ENCODE measurements at regions of chr7 and their contacts with region 1.

Region 1: GRCh38 chr7:18064242-18064838 is 36.7 kb upstream of the PRPS1L1 start:
- DNase-seq: peak in 1 of 2 experiments; percentile 80
- H3K4me3 ChIP-seq: no peak overlapping the region
- H3K27ac ChIP-seq: no peak overlapping the region
- H3K4me1 ChIP-seq: peaks cover 0 to under 1% (median 0%) of the 10 kb centered on the region in 4 experiments; a peak in 1 of 7 replicates
- H3K27me3 ChIP-seq: peaks cover 0 to 1% (median 0%) of the 10 kb centered on the region in 4 experiments; a peak in 1 of 7 replicates
- CTCF ChIP-seq: peak in 2 of 3 experiments; percentile 60 to 79; a peak in 3 of 4 replicates
- EP300 ChIP-seq: no peak
- POLR2A ChIP-seq: no peak
- RAD21 ChIP-seq: peak; percentile 65 to 73

Region 2: DNA sequence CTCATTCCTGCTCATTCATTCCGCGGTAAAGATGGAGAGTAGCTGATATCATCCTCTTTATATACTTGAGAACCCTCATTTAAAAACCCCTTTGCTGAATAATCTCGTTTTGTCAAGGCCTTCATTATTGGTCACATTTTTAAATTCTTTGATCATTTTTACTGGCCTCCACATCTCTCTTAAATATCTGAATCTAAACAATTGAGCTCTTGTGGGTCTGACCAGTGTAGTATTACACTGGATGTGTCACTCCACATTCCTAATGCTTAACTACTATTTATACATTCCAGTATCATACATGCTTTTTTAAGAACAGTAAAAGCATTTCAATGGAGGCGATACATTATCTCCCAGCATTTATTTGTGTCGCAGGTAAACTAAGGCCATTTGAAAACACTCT is 24.1 kb before region 1 on chr7:
- CTCF ChIA-PET with region 1: interaction called, 13 read pairs
- POLR2A ChIA-PET with region 1: no interaction called
- DNase-seq: no peak
- H3K4me3 ChIP-seq: no peak overlapping the region
- H3K27ac ChIP-seq: no peak overlapping the region
- H3K4me1 ChIP-seq: no peaks in the 10 kb centered on the region
- H3K27me3 ChIP-seq: no peaks in the 10 kb centered on the region
- CTCF ChIP-seq: no peak
- EP300 ChIP-seq: no peak
- POLR2A ChIP-seq: no peak
- RAD21 ChIP-seq: no peak

Region 3: GRCh38 chr7:18049262-18049661 is 15.1 kb before region 1 on chr7:
- CTCF ChIA-PET with region 1: interaction called, 22 read pairs
- POLR2A ChIA-PET with region 1: no interaction called
- DNase-seq: no peak
- H3K4me3 ChIP-seq: no peak overlapping the region
- H3K27ac ChIP-seq: no peak overlapping the region
- H3K4me1 ChIP-seq: no peaks in the 10 kb centered on the region
- H3K27me3 ChIP-seq: no peaks in the 10 kb centered on the region
- CTCF ChIP-seq: no peak
- EP300 ChIP-seq: no peak
- POLR2A ChIP-seq: no peak
- RAD21 ChIP-seq: no peak

Region 4: DNA sequence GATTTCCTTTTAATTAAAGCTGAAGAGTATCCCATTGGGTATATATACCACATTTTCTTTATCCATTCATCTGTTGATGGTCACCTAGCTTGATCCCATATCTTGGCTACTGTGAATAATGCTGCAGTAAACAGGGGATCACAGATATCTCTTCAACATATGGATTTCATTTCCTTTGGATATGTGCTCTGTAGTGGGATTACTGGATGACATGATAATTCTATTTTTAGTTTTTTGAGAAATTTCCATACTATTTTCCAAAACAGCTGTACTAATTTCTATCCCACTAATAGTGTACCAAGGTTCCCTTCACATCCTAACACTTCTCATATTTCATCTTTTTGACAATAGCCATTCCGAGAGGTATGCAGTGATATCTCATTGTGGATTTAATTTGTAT is 12.1 kb after region 1 on chr7:
- CTCF ChIA-PET with region 1: interaction called, 28 read pairs
- POLR2A ChIA-PET with region 1: no interaction called
- DNase-seq: no peak
- H3K4me3 ChIP-seq: no peak overlapping the region
- H3K27ac ChIP-seq: no peak overlapping the region
- H3K4me1 ChIP-seq: no peaks in the 10 kb centered on the region
- H3K27me3 ChIP-seq: no peaks in the 10 kb centered on the region
- CTCF ChIP-seq: no peak
- EP300 ChIP-seq: no peak
- POLR2A ChIP-seq: no peak
- RAD21 ChIP-seq: no peak

Region 5: GRCh38 chr7:18086165-18087030 is 22.1 kb after region 1 on chr7:
- CTCF ChIA-PET with region 1: interaction called, 22 read pairs
- POLR2A ChIA-PET with region 1: no interaction called
- DNase-seq: peak in 1 of 2 experiments; percentile 69
- H3K4me3 ChIP-seq: peak overlapping the region; percentile 38 to 89 (median 64)
- H3K27ac ChIP-seq: no peak overlapping the region
- H3K4me1 ChIP-seq: peaks cover 0 to 9% (median 3%) of the 10 kb centered on the region in 4 experiments; a peak in 4 of 7 replicates
- H3K27me3 ChIP-seq: peaks cover 5 to 27% (median 17%) of the 10 kb centered on the region in 4 experiments
- CTCF ChIP-seq: no peak
- EP300 ChIP-seq: no peak
- POLR2A ChIP-seq: no peak
- RAD21 ChIP-seq: no peak

Region 6: GRCh38 chr7:18119985-18120384 is 55.6 kb after region 1 on chr7:
- CTCF ChIA-PET with region 1: interaction called, 17 read pairs
- POLR2A ChIA-PET with region 1: no interaction called
- DNase-seq: no peak
- H3K4me3 ChIP-seq: no peak overlapping the region
- H3K27ac ChIP-seq: no peak overlapping the region
- H3K4me1 ChIP-seq: no peaks in the 10 kb centered on the region; a peak in 1 of 7 replicates
- H3K27me3 ChIP-seq: no peaks in the 10 kb centered on the region
- CTCF ChIP-seq: peak; percentile 57 to 64 (median 61)
- EP300 ChIP-seq: no peak
- POLR2A ChIP-seq: no peak
- RAD21 ChIP-seq: peak; percentile 83 to 87

Region 7: DNA sequence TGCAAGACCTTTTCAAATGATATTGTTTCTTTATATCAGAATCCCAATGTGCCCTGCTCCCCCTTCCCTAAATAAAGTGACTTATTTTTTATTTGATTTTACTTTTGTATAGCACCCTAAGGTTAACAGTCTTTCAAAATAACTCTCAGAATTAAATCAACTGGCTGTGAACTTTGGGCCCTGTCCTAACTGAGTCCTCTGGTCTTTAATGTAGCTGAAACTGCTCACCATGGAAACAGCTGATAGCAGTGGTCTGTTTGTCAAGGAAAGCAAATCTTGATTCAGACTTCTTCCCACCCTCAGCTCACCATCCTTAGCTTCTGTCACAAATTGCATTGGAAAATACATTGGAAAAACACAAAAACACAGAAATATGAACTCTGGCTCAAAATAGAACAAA is 68.5 kb after region 1 on chr7:
- CTCF ChIA-PET with region 1: no interaction called
- POLR2A ChIA-PET with region 1: no interaction called
- DNase-seq: no peak
- H3K4me3 ChIP-seq: no peak overlapping the region
- H3K27ac ChIP-seq: no peak overlapping the region
- H3K4me1 ChIP-seq: no peaks in the 10 kb centered on the region
- H3K27me3 ChIP-seq: no peaks in the 10 kb centered on the region
- CTCF ChIP-seq: no peak
- EP300 ChIP-seq: no peak
- POLR2A ChIP-seq: no peak
- RAD21 ChIP-seq: no peak